B cell (primary cell): ENCODE measurements at regions of chr12 and their contacts with region 1.

Region 1: DNA sequence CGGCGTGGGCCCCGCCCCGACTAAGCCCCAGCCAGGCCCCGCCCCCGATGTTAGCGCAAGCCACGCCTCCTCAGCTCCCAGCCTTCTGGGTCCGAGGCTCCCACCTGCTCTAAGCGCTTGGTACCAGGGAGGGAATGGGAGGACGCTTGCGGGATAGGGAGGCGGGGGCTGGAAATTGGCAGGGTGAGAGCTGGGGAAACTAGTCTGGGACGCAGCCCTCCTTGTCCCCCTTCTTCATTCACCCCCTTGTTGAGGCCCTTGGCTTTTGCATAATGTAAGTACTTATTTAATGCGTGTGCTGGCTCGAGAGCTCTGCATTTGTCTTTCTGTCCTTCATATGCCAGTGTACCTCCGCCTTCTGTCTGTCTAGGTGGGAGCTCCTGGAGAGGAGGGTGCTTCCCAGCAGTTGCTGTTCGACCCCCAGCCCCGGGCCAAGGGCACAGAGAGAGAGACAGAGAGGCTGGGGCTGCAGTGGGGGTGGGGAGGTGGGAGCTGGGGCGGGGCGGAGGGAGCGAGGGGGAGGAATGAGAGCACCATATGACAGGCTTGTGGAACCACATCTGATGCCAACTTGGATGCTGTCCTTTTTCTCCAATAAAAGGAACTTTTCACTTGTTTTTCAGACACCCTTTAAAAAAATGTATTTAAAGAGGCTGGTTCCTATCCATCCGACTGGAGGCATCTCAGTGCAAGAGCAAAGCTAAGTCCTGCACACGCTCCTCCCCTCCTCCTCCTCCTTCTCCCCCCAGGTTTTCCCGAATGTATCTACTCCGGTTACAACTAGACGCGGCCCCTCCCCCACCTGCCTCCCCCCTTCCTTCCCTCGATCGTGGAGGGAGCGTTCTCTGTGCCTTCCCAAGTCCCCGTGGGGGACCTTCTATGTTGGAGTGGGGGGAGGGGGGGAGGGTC is 25.6 kb upstream of the MAP1LC3B2 start:
- DNase-seq: peak; percentile 85
- ATAC-seq: peak; percentile 93
- H3K4me3 ChIP-seq: peak overlapping the region; percentile 53 to 96 (median 67)
- H3K4me3 Mint-ChIP-seq: peak overlapping the region; percentile 85
- H3K27ac ChIP-seq: no peak overlapping the region
- H3K27ac Mint-ChIP-seq: peak overlapping the region; percentile 90
- H3K4me1 ChIP-seq: peaks cover 37 to 43% of the 10 kb centered on the region in 2 donors
- H3K4me1 Mint-ChIP-seq: peaks cover 52% of the 10 kb centered on the region
- H3K27me3 ChIP-seq: no peaks in the 10 kb centered on the region
- H3K27me3 Mint-ChIP-seq: no peaks in the 10 kb centered on the region
- CTCF ChIP-seq: no peak

Region 2: GRCh38 chr12:116299658-116300328 is 233.8 kb before region 1 on chr12:
- CTCF ChIA-PET with region 1: no interaction called
- POLR2A ChIA-PET with region 1: no interaction called
- intact Hi-C with region 1: no loop called
- DNase-seq: no peak
- ATAC-seq: no peak
- H3K4me3 ChIP-seq: no peak overlapping the region
- H3K4me3 Mint-ChIP-seq: no peak overlapping the region
- H3K27ac ChIP-seq: no peak overlapping the region
- H3K27ac Mint-ChIP-seq: no peak overlapping the region
- H3K4me1 ChIP-seq: peaks cover 0 to 5% of the 10 kb centered on the region in 2 donors
- H3K4me1 Mint-ChIP-seq: peaks cover 7% of the 10 kb centered on the region
- H3K27me3 ChIP-seq: no peaks in the 10 kb centered on the region
- H3K27me3 Mint-ChIP-seq: peaks cover 4% of the 10 kb centered on the region
- CTCF ChIP-seq: no peak

Region 3: DNA sequence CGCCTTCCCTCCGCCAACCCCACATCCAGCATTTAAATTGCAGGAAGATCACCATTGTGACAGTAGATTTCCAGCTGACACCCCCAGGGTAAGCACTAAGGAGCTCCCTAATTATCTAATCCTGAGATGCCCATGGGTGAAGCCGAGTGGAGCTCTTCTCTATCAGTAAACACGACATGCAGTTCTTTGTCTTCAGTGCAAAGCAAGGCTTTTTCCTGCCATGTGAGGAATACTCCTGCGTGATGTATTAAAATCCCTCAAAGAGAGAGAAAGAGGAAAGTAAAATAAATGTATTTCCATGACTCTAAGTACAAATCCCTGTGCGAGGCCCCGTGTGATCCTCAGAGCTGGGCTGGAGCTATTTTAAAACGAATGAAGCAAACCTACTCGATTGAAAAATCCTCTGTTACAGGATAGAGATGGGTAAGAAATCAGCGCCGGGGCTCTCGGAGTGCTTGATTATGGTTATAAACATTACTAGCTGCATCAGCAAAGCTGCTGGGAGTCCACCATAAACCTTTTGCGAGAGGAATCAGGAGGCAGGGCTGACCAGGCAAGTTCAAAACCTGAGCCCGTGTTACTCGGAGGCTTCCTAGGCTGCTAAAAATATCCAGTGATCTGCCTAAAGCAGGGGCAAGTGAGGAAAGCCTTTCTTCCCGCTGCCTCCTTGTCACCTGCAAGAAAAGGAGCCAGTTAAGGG is 87.0 kb after region 1 on chr12:
- CTCF ChIA-PET with region 1: no interaction called
- POLR2A ChIA-PET with region 1: interaction called, 11 read pairs
- intact Hi-C with region 1: no loop called
- DNase-seq: no peak
- ATAC-seq: no peak
- H3K4me3 ChIP-seq: no peak overlapping the region
- H3K4me3 Mint-ChIP-seq: no peak overlapping the region
- H3K27ac ChIP-seq: no peak overlapping the region
- H3K27ac Mint-ChIP-seq: no peak overlapping the region
- H3K4me1 ChIP-seq: no peaks in the 10 kb centered on the region
- H3K4me1 Mint-ChIP-seq: no peaks in the 10 kb centered on the region
- H3K27me3 ChIP-seq: no peaks in the 10 kb centered on the region
- H3K27me3 Mint-ChIP-seq: peaks cover 6% of the 10 kb centered on the region
- CTCF ChIP-seq: no peak